Left ventricle myocardium superior (tissue), 1 donor: ENCODE measurements at regions of chr15 and their contacts with region 1.

Region 1: GRCh38 chr15:29747837-29748417 is 74.3 kb downstream of the TJP1 start:
- DNase-seq: no peak
- ATAC-seq: no peak

Region 2: GRCh38 chr15:29805043-29805707 is 57.2 kb after region 1 on chr15:
- intact Hi-C with region 1: loop called (anchors 10 kb)
- DNase-seq: no peak
- ATAC-seq: peak; percentile 88